Left colon (tissue), 2 donors: ENCODE measurements at regions of chr4 and their contacts with region 1.

Region 1: GRCh38 chr4:183074296-183074990 is 24.6 kb upstream of the WWC2 start:
- DNase-seq: no peak
- ATAC-seq: no peak

Region 2: GRCh38 chr4:183256756-183257385 is 182.4 kb after region 1 on chr4:
- intact Hi-C with region 1: loop called (anchors 5 to 10 kb)
- DNase-seq: peak; percentile 41 to 66
- ATAC-seq: peak; percentile 35

Region 3: DNA sequence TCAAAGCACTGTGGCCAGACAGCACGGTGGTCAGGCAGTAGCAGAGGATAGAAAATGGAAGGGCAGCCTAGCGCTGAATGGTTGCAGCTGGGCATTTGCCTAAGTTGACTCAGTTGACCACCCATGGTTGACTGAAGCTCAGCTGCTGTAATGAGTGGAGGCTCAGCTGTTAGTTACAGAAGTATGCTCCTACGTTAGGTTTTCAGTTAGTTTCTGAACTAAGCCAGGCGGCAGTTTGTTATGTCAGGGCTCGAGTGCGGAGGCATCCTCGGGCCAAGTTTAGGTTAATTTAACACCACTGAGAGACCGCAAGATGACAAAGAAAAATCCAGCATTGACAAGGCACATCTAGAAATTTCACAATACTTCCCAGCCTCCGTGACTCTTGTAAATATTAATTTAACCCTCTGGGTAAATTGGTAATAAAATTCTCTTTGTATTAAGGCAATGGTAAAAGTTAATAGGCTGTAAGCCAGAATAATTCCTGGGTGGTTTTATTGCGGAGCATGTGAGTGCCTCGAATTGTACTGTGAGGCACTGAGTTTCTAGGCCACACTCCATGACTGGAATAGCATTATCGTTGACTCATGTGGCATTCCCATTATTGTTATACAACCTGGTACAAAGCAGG is 336.9 kb after region 1 on chr4:
- intact Hi-C with region 1: loop called in 1 of 2 experiments (anchors 5 kb)
- DNase-seq: no peak
- ATAC-seq: no peak